GM18951 (cell line): ENCODE measurements at regions of chr20 and their contacts with region 1.

Region 1: GRCh38 chr20:47400685-47401084 is 44.2 kb upstream of the ZMYND8 start:
- POLR2A ChIP-seq: no peak

Region 2: GRCh38 chr20:46757754-46758678 is 642.7 kb before region 1 on chr20:
- in situ Hi-C with region 1: loop called (anchors 10 kb)
- POLR2A ChIP-seq: no peak

Region 3: GRCh38 chr20:47568001-47568407 is 167.3 kb after region 1 on chr20:
- in situ Hi-C with region 1: no loop called
- POLR2A ChIP-seq: no peak

Region 4: DNA sequence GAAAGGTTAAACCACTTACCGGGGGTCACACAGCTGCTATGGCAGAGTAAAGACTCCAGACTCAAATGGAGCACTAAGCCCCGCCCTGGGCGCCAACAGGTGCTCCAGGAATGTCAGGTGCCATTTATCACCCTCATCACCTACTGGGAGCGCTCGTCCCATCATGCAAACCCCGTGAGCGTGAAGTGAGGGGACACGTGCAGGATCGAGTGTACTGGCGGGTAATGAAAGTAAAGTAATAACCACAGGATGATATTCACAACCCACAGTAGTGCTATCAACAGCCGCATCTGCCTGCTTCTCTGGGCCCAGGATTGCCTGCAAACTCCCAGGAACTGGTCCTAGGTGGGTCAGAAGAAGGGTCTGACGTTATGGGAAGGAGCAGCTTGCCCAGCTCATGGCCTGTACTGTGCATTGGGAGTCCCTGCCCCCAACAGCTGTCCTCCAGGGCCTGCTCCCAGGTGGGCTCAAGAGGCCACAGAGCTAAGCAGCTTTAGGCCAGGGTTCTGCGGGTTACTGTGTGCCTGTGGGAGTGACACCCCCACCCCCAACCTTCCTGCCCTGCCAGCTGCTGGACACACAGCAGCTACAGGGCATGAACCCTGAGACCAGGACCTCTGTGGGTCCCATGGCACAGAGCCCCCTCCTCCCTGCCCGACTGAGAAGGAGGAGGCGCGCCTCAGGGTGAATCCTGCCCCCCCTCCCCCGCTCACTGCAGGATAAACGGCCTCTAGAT is 505.1 kb after region 1 on chr20:
- in situ Hi-C with region 1: no loop called
- POLR2A ChIP-seq: no peak